Left lung (tissue), 14 donors: ENCODE measurements at regions of chr1 and their contacts with region 1.

Region 1: DNA sequence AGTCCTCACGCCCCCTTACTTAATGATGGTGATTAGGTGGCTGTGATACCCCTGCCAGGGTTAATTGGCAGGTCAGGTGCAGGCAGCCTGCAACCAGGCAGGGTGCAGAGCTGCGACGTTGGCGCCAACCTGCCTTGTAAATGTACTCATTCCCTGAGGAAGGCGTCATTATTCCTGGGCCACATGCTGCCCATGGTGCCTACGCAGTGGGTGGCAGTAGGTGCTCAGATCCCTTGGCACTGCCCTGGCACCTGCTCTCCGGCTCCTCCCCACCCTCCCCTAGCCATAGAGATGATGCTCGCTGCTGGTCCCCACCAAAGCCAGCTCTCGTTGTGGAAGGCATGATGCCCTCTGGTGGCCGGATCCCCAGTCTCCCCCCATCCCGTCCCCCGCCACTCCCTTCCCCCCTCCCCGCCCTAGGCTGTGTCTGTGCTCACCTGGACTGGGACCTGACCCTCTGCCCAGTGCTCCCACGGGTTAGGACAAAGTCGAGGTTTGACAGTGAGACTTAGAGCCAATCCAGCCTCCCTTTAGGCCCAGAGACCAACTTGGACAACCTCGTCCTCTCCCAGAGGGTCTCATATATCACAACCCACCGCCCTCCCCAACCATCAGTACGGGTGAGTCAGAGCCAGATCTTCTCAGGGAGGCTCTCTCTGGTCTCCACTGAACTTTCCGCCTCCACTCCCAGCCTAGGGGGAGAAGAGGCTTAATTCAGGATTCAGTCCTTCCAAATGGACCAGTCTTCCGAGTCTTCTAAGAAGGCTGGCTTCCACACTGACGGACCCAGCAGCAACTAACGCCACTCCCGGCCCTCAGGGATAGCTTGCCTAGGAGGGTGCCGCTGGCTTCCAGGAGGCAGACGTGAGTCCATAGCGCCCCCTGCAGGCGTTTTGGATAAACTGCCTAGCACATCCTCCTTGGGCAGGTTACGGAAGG is 5.7 kb downstream of the KRTCAP2 start:
- DNase-seq: peak; percentile 67 to 95 (median 88)
- ATAC-seq: peak; percentile 93
- H3K4me3 ChIP-seq: no peak overlapping the region
- H3K27ac ChIP-seq: peak overlapping the region in 1 of 2 donors; percentile 67
- H3K4me1 ChIP-seq: peaks cover 8 to 32% of the 10 kb centered on the region in 2 donors
- H3K27me3 ChIP-seq: peaks cover 0 to 12% of the 10 kb centered on the region in 2 donors
- CTCF ChIP-seq: peak; percentile 68 to 90

Region 2: DNA sequence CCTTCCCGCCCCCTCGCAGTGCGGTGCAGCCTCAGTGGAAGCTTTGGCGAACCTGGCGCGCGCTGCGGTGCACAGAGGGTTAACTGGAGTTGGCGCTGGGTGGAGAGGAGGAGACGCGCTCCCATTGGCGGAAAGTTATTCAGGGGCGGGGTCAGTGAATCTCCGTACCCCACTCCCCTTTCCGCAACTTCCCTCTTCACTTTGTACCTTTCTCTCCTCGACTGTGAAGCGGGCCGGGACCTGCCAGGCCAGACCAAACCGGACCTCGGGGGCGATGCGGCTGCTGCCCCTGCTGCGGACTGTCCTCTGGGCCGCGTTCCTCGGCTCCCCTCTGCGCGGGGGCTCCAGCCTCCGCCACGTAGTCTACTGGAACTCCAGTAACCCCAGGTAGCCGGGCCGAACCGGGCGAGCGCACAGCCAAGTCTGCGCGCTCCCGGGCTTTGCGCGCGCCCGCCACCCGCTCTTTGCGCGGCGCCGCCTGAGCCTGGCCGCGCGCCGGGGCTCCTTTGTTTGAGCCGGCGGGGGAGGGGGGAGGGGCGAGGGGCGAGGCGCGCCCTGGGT is 103.8 kb before region 1 on chr1 and contains the start of gene EFNA4:
- intact Hi-C with region 1: no loop called
- DNase-seq: peak; percentile 86 to 94 (median 91)
- ATAC-seq: peak; percentile 95
- H3K4me3 ChIP-seq: peak within 1 kb of the TSS; percentile 73 to 84
- H3K27ac ChIP-seq: peak within 1 kb of the TSS; percentile 63 to 88
- H3K4me1 ChIP-seq: peaks cover 12 to 43% of the 10 kb centered on the region in 2 donors
- H3K27me3 ChIP-seq: no peaks in the 10 kb centered on the region
- CTCF ChIP-seq: no peak
- polyA plus RNA-seq, gene EFNA4: 19.1 to 23.1 (median 22.6) TPM

Region 3: DNA sequence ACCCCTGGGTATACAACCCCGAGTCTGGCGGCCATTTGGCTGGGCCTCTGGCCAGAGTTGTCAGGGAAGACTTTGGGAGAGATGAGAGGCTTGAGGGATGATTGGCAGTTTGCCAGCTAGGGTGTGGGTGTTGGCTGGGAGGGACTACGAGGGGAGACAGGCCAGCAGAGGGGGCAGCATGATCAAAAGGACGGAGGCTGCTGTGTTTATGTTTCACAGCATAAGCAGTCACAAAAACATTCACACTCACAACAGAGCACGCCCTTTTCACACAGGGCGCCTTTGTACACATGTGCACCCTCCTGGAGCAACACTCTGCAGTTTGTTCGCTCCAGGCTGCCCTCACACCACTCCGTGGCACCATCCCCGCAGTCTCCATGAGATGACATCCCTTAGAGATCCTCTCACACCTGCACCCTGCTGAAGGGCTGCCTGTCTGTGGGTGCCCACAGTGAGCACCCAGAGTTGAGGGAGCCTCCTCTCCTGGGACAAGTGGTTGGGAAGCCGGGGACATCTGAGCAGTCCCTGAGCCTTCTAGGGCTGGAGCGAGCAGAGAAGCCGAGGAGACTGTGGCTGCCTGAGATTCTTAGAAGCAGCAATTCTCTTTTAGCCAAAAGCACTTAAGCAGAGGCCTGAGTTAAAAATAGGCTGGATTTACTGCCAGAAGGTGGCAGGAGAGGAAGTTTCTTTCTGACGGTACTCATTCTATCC is 73.4 kb before region 1 on chr1:
- intact Hi-C with region 1: loop called in 1 of 2 experiments (anchors 2 kb)
- DNase-seq: peak in 2 of 4 donors; percentile 42 to 72
- ATAC-seq: peak; percentile 77
- H3K4me3 ChIP-seq: no peak overlapping the region
- H3K27ac ChIP-seq: peak overlapping the region in 1 of 2 donors; percentile 49
- H3K4me1 ChIP-seq: peaks cover 11 to 21% of the 10 kb centered on the region in 2 donors
- H3K27me3 ChIP-seq: no peaks in the 10 kb centered on the region
- CTCF ChIP-seq: no peak